ENCODE measurements at regions of chr4 and their contacts with region 1.

Region 1: DNA sequence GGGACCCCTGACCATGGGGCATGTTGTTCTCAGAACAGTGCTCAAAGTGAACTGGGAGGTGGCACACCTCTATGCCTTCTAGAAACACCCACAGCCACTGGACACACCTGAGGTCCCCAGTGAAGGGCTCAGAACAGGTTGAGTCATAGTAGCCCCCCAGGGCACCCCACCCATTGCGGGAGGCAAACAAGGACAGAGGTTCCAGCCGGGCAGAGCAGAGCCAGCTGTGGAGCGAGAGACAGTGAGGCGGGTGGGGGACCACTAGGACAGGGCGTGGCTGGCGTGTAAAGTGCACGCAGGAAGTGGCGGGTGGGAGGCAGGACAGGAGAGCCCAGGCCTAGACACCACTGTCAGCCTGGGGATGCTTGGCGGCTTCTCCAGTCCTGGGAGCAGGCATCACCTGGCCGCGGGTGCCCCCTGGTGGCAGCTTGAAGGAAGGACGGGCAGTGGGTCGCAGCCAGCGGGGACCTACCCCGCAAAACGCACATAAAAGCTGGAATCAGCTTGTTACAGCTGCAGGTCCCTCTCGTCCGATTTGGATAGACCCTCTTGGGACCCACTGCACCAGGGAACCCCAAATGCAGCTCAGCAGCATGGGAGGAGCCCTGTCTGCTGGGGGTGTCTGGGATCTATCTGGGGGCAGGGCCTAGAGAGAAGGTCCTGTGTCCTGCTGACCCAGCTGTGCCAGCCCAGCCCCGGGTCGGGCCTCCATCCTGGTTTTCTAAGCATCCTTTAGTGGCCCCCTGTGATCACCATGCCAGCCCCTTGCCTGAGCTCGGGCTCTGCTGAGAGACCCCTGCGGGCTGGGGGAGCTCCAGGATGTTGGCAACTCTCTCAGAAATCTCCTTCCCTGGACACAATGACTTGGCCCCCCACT is 57.6 kb downstream of the WFS1 start:
- DNase-seq: peak; percentile 60
- ATAC-seq: peak; percentile 70
- H3K4me3 ChIP-seq: peak overlapping the region in 1 of 3 experiments; percentile 47; a peak in 1 of 6 replicates
- H3K27ac ChIP-seq: no peak overlapping the region
- H3K4me1 ChIP-seq: peaks cover 80% of the 10 kb centered on the region
- H3K27me3 ChIP-seq: peaks cover 0 to 18% of the 10 kb centered on the region in 2 experiments; a peak in 3 of 5 replicates
- CTCF ChIP-seq: peak; percentile 99
- EP300 ChIP-seq: no peak
- POLR2A ChIP-seq: no peak
- RAD21 ChIP-seq: peak; percentile 99

Region 2: DNA sequence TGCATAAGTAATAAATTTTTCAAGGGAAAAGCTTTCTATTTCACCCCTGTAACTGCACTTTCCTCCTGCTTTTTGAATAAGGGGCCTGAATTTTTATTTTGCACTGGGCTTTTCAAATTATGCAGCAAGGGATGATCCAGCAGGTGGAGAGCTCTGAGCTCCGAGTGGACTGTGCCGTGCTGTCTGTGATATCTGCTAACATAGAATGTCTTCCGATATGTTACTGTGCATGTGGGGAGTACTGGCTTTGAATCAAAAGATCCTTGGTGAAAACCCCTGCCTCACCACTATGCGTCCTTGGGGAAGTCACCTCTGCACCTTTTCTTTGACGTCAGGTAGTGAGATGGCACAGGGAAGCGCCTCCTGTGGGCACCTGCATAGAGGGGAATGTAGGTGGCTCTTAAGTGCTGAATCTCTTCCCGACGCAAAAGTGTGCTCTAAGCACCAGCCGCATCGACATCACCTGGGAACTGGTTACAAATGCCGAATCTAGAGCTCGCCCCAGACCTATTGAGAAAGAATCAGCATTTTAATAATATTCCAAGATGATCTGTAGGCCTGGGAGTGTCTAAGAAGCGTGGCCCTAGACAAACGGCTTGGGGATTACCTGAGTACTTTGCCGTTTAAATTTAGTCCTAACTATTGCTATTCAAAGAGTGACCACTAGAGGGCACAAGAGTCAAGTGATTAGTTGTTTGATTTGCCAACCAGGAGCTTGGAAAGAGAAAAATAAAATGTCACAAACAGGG is 76.9 kb before region 1 on chr4:
- CTCF ChIA-PET with region 1: interaction called, 66 read pairs
- POLR2A ChIA-PET with region 1: no interaction called
- in situ Hi-C with region 1: no loop called
- intact Hi-C with region 1: loop called (anchors 1 kb)
- DNase-seq: peak; percentile 67
- ATAC-seq: peak; percentile 54
- H3K4me3 ChIP-seq: no peak overlapping the region
- H3K27ac ChIP-seq: no peak overlapping the region
- H3K4me1 ChIP-seq: no peaks in the 10 kb centered on the region
- H3K27me3 ChIP-seq: peaks cover 2 to 40% of the 10 kb centered on the region in 2 experiments; a peak in 2 of 5 replicates
- CTCF ChIP-seq: peak; percentile 76
- EP300 ChIP-seq: no peak
- POLR2A ChIP-seq: no peak
- RAD21 ChIP-seq: peak; percentile 66

Region 3: GRCh38 chr4:6264225-6264540 is 63.1 kb before region 1 on chr4:
- CTCF ChIA-PET with region 1: interaction called, 50 read pairs
- POLR2A ChIA-PET with region 1: interaction called, 19 read pairs
- in situ Hi-C with region 1: loop called (anchors 5 kb)
- intact Hi-C with region 1: loop called (anchors 1 kb)
- DNase-seq: peak; percentile 60
- ATAC-seq: peak; percentile 89
- H3K4me3 ChIP-seq: no peak overlapping the region
- H3K27ac ChIP-seq: no peak overlapping the region
- H3K4me1 ChIP-seq: peaks cover 42% of the 10 kb centered on the region
- H3K27me3 ChIP-seq: peaks cover 3 to 18% of the 10 kb centered on the region in 2 experiments; a peak in 3 of 5 replicates
- CTCF ChIP-seq: peak; percentile 96
- EP300 ChIP-seq: no peak
- POLR2A ChIP-seq: no peak
- RAD21 ChIP-seq: peak; percentile 88

Region 4: GRCh38 chr4:6269616-6270511 is 57.4 kb before region 1 on chr4 and contains the start of gene WFS1:
- CTCF ChIA-PET with region 1: interaction called, 50 read pairs
- POLR2A ChIA-PET with region 1: interaction called, 19 read pairs
- in situ Hi-C with region 1: no loop called
- intact Hi-C with region 1: no loop called
- DNase-seq: peak; percentile 94
- ATAC-seq: peak; percentile 97
- H3K4me3 ChIP-seq: peak within 1 kb of the TSS; percentile 87 to 99 (median 92)
- H3K27ac ChIP-seq: peak within 1 kb of the TSS; percentile 80
- H3K4me1 ChIP-seq: peaks cover 77% of the 10 kb centered on the region
- H3K27me3 ChIP-seq: no peaks in the 10 kb centered on the region
- CTCF ChIP-seq: no peak
- EP300 ChIP-seq: no peak
- POLR2A ChIP-seq: peak in 1 of 2 experiments; percentile 84; a peak in 2 of 4 replicates
- RAD21 ChIP-seq: no peak
- total RNA-seq, gene WFS1: 19.8 and 39.1 TPM in 2 replicates

Region 5: DNA sequence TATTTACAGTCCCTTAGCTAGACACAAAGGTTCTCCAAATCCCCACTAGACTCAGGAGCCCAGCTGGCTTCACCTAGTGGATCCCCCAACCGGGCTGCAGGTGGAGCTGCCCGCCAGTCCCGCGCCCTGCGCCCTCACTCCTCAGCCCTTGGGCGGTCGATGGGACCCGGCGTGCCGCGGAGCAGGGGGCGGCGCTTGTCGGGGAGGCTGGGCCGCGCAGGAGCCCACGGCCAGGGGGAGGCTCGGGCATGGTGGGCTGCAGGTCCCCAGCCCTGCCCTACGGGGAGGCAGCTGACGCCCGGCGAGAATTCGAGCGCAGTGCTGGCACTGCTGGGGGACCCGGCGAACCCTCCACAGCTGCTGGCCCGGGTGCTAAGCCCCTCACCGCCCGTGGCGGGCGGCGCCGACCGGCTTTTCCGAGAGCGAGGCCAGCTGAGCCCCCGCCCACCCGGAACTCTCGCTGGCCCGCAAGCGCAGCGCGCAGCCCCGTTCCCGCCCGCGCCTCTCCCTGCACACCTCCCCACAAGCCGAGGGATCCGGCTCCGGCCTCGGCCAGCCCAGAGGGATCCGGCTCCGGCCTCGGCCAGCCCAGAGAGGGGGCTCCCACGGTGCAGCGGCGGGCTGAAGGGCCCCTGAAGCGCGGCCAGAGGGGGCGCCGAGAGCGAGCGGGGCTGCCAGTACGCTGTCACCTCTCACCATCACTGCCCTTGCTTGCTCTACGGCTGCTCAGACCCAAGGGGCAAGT is 18.2 kb before region 1 on chr4:
- CTCF ChIA-PET with region 1: interaction called, 26 read pairs
- POLR2A ChIA-PET with region 1: interaction called, 31 read pairs
- in situ Hi-C with region 1: no loop called
- intact Hi-C with region 1: loop called (anchors 1 kb)
- DNase-seq: peak; percentile 79
- ATAC-seq: peak; percentile 91
- H3K4me3 ChIP-seq: peak overlapping the region; percentile 71 to 74 (median 74)
- H3K27ac ChIP-seq: peak overlapping the region; percentile 65
- H3K4me1 ChIP-seq: peaks cover 43% of the 10 kb centered on the region
- H3K27me3 ChIP-seq: no peaks in the 10 kb centered on the region
- CTCF ChIP-seq: peak; percentile 84
- EP300 ChIP-seq: no peak
- POLR2A ChIP-seq: peak in 1 of 2 experiments; percentile 61; a peak in 2 of 4 replicates
- RAD21 ChIP-seq: peak; percentile 93

Region 6: DNA sequence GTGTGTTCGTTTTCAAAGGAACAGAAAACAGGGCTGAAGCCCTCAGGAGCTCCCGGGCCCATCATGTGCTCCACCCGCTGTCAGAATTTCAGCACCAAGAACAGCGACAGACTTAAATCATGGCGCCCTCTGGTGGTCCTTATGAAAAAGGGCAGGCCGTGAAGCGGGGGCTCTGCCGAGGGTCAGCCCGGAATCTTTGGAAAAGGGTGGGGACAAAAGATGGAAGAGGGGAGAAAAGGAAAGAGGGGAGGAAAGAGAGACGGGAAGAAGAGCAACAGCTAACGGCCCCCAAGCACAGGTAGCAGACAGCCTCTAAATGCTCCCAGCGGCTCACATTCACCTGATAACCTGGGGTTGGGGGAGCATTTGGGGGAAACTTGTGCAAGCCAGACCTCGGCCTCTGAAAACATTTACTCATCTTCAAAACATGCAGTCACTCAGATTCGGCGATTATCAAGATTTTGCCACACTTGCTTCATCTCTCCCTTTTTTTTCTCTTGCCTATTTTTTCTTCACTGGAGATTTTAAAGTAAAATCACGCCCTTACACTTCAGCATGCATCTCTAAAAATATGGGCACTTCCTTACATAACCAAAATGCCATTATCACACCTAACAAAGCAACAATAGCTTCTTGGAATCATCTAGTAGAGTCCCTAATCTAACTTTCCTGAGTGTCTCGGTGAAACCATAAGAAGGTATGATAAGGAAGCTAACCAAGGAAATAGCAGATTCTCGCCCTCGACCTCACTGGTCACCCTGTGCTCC is 219.6 kb after region 1 on chr4:
- CTCF ChIA-PET with region 1: no interaction called
- POLR2A ChIA-PET with region 1: no interaction called
- in situ Hi-C with region 1: loop called (anchors 10 kb)
- intact Hi-C with region 1: no loop called
- DNase-seq: peak; percentile 59
- ATAC-seq: peak; percentile 77
- H3K4me3 ChIP-seq: no peak overlapping the region
- H3K27ac ChIP-seq: no peak overlapping the region
- H3K4me1 ChIP-seq: no peaks in the 10 kb centered on the region
- H3K27me3 ChIP-seq: peaks cover 0 to 19% of the 10 kb centered on the region in 2 experiments; a peak in 3 of 5 replicates
- CTCF ChIP-seq: peak; percentile 90
- EP300 ChIP-seq: no peak
- POLR2A ChIP-seq: no peak
- RAD21 ChIP-seq: peak; percentile 67

Measured in HepG2 (cell line).